ENCODE measurements at regions of chr6 and their contacts with region 1.

Region 1: GRCh38 chr6:122839477-122839876 is 50.4 kb downstream of the SMPDL3A start:
- DNase-seq: peak in 6 of 10 donors; percentile 10 to 83 (median 68)

Region 2: GRCh38 chr6:122491919-122492555 is 347.4 kb before region 1 on chr6:
- intact Hi-C with region 1: loop called (anchors 5 kb)
- DNase-seq: peak; percentile 30 to 96 (median 76)

Region 3: DNA sequence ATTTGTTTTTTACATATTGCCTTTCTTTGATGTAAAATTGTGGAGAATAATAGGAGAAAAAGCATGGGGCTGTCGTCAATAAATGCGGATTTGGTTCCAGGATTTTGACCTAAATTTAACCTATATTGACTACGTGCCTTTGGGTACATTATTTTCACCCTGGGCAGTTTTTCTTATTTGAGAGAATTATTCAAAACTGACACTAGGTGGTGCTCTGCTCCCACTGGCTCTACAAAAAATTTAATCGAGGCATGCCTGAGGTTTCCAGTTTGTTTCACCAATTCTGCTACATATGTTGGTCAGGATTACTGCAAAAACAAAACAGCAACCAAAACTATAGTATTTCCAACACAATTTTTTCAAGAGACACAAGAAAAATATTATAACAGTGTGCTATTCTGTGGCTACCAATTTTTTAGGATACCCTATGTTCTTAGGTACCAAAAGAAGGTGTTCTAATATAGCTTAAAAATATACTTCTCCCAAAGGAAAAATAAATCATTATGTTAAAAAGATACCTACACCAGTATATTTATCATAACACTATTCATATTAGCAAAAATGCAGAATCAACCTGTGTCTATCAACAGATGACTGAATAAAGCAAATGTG is 108.6 kb before region 1 on chr6:
- intact Hi-C with region 1: loop called (anchors 1 kb)
- DNase-seq: peak in 2 of 10 donors; percentile 23 to 34

Region 4: DNA sequence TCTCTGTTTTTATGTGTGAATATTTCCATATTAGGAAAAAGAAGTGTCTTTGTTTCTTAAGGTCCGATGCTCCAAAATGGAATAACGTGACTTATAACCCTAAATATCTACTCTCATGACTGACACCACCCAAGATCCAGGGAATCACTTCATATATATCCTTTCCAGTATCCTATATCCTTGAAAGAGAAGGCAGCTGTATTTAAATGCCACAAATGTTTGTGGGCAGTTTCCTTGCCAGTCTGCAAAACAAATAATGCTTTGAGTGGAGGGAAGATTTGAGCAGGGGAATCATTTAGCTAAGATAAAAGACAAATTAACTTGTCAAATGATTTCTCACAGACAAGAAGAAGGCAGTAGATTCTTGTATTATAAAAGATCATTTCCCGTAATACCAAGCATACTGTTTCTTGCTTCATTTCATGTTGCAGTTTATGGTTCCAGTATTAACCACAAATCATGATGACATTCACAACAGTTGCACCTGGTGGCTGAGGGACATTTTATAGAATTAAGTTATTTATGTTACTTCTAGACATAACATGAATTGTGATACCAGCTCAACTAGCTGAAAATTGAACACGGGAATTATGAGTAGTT is 89.9 kb before region 1 on chr6:
- intact Hi-C with region 1: loop called (anchors 1 kb)
- DNase-seq: no peak

Region 5: DNA sequence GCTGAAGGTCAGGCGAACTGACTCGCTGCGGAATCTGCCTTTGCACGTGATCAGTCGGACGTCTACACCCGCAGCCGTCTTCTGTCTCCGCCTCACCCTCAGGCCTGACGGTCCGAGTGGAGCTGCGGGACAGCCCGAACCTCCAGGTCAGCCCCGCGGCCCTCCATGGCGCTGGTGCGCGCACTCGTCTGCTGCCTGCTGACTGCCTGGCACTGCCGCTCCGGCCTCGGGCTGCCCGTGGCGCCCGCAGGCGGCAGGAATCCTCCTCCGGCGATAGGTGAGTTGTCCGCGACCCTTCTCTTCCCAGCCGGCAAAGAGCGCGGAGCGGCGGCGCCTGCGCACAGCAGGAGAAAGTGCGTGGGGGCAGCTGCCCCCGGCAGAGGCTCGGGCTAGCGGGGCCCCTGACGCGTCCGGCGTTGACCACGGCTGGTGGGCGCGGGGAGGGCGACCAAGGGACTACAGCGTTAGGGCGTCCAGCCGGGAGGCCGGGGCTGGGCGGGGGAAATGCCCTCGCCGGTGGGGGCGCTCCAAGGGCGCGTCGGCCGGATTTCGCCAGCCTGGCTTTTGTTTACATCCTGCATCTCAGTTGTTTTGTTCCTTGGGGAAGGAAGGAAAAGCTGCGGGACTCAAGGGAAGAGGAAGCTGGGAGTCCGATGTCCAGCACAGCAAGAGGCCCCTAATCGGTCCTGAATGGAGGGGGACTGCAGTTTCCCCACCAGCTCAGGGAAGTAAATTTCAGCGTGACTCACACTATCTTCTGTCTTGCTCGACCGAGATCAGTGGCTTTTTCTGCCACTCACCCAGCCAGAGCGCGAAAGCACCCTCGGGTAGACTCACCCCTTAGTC is 50.1 kb before region 1 on chr6 and contains the start of gene SMPDL3A:
- intact Hi-C with region 1: loop called (anchors 5 kb)
- DNase-seq: peak; percentile 69 to 96 (median 73)